ENCODE measurements at regions of chr20 and their contacts with region 1.

Region 1: GRCh38 chr20:36745927-36746659 is at the start of gene NDRG3:
- DNase-seq: peak; percentile 92 to 95
- ATAC-seq: peak; percentile 80 to 90
- H3K4me3 ChIP-seq: peak within 1 kb of the TSS; percentile 79 to 94 (median 88)
- H3K27ac ChIP-seq: peak within 1 kb of the TSS; percentile 88 to 95 (median 92)
- H3K4me1 ChIP-seq: peaks cover 18 to 32% of the 10 kb centered on the region in 2 donors
- H3K27me3 ChIP-seq: no peaks in the 10 kb centered on the region
- CTCF ChIP-seq: peak in 2 of 5 experiments; percentile 5 to 8
- POLR2A ChIP-seq: peak; percentile 29 to 68
- total RNA-seq, gene NDRG3: 6.7 to 24.9 (median 13.2) TPM

Region 2: GRCh38 chr20:36773597-36774390 is 27.7 kb after region 1 on chr20 and contains the start of gene DSN1:
- in situ Hi-C with region 1: no loop called
- intact Hi-C with region 1: loop called (anchors 1 kb)
- DNase-seq: peak; percentile 93 to 97
- ATAC-seq: peak; percentile 94 to 96
- H3K4me3 ChIP-seq: peak within 1 kb of the TSS; percentile 82 to 91 (median 84)
- H3K27ac ChIP-seq: peak within 1 kb of the TSS; percentile 88 to 95 (median 91)
- H3K4me1 ChIP-seq: peaks cover 8 to 12% of the 10 kb centered on the region in 2 donors
- H3K27me3 ChIP-seq: no peaks in the 10 kb centered on the region
- CTCF ChIP-seq: no peak
- POLR2A ChIP-seq: peak; percentile 50 to 52
- total RNA-seq, gene DSN1: 3.2 to 6.3 (median 5.2) TPM

Region 3: DNA sequence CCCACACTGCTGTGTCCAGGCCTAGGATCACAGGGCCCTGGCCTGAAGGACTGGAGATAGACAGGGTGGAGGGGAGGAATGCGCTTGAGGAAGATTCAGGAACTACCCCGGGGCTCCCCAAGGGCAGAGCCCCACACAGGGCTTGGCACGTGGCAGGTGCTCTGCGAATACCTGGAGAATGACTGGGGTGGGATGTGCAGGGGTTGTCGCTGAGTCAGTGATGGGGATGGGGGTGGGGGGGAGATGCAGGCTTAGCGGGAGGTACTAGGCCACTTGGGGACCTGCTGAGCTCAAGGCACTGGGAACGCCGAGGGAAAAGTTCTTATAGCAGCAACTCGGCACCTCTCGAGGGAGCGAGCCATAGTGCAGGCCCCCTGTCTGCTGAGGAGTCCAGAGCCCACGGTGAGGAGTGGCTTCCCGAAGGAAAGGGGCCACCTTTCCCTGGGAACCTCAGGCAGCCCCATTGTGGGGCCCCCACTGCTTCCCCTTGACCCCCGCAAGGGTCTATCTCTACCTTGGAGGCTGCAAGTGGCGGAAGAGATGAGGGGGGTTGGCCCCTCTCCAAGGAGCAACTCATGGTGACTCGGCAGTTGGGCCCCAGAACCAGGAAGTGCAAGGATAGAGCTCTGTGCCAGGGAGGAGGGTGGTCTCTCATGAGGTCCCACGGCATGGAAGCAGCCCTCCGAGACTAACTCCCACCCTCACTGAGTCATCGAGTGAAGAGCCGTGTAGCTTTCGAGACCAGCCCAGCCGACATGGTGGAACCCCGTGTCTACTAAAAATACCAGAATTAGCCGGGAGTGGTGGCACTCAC is 632.9 kb after region 1 on chr20:
- in situ Hi-C with region 1: no loop called
- intact Hi-C with region 1: no loop called
- DNase-seq: no peak
- ATAC-seq: no peak
- H3K4me3 ChIP-seq: no peak overlapping the region
- H3K27ac ChIP-seq: no peak overlapping the region
- H3K4me1 ChIP-seq: no peaks in the 10 kb centered on the region
- H3K27me3 ChIP-seq: no peaks in the 10 kb centered on the region
- CTCF ChIP-seq: no peak
- POLR2A ChIP-seq: no peak

Measured in gastrocnemius medialis (tissue), 4 donors.